H1 (cell line): ENCODE measurements at regions of chr2 and their contacts with region 1.

Region 1: GRCh38 chr2:180980106-180980942 is at the start of gene UBE2E3:
- DNase-seq: peak; percentile 54 to 91
- H3K4me3 ChIP-seq: peak within 1 kb of the TSS; percentile 81 to 97 (median 93)
- H3K27ac ChIP-seq: peak within 1 kb of the TSS; percentile 61
- H3K4me1 ChIP-seq: peaks cover 0 to 12% (median 3%) of the 10 kb centered on the region in 4 experiments; a peak in 1 of 7 replicates
- H3K27me3 ChIP-seq: no peaks in the 10 kb centered on the region; a peak in 1 of 7 replicates
- CTCF ChIP-seq: peak; percentile 50 to 62 (median 60)
- EP300 ChIP-seq: peak in 1 of 2 experiments; percentile 49; a peak in 2 of 3 replicates
- POLR2A ChIP-seq: peak; percentile 75 to 88
- RAD21 ChIP-seq: peak; percentile 52 to 54
- total RNA-seq, gene UBE2E3: 96.0 and 106 TPM in 2 replicates

Region 2: DNA sequence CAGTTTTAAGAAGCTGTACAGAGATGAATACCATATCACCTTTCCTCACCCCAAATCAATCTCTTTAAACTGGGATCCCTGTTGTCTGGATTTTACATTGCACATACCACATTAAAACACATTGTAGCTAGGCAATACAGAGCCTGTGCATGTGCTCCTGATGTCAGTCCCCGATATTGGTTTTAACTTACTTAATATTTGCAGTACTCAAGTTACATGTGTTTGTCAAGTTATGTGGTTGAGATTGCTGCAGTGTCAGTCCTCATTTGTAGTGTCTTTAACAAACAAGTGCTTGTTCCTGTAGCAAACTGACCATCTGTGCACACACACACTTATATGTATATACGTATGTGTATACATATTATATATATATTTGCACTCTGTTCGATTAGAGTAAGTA is 10.3 kb before region 1 on chr2:
- CTCF ChIA-PET with region 1: interaction called, 11 read pairs
- POLR2A ChIA-PET with region 1: interaction called, 9 read pairs
- DNase-seq: no peak
- H3K4me3 ChIP-seq: no peak overlapping the region
- H3K27ac ChIP-seq: no peak overlapping the region
- H3K4me1 ChIP-seq: no peaks in the 10 kb centered on the region
- H3K27me3 ChIP-seq: no peaks in the 10 kb centered on the region
- CTCF ChIP-seq: no peak
- EP300 ChIP-seq: no peak
- POLR2A ChIP-seq: no peak
- RAD21 ChIP-seq: no peak

Region 3: GRCh38 chr2:180991820-180992219 is 11.5 kb after region 1 on chr2:
- CTCF ChIA-PET with region 1: interaction called, 18 read pairs
- POLR2A ChIA-PET with region 1: interaction called, 17 read pairs
- DNase-seq: no peak
- H3K4me3 ChIP-seq: no peak overlapping the region
- H3K27ac ChIP-seq: no peak overlapping the region
- H3K4me1 ChIP-seq: peaks cover 0 to 2% (median 0%) of the 10 kb centered on the region in 4 experiments; a peak in 2 of 7 replicates
- H3K27me3 ChIP-seq: no peaks in the 10 kb centered on the region
- CTCF ChIP-seq: no peak
- EP300 ChIP-seq: no peak
- POLR2A ChIP-seq: no peak
- RAD21 ChIP-seq: no peak

Region 4: DNA sequence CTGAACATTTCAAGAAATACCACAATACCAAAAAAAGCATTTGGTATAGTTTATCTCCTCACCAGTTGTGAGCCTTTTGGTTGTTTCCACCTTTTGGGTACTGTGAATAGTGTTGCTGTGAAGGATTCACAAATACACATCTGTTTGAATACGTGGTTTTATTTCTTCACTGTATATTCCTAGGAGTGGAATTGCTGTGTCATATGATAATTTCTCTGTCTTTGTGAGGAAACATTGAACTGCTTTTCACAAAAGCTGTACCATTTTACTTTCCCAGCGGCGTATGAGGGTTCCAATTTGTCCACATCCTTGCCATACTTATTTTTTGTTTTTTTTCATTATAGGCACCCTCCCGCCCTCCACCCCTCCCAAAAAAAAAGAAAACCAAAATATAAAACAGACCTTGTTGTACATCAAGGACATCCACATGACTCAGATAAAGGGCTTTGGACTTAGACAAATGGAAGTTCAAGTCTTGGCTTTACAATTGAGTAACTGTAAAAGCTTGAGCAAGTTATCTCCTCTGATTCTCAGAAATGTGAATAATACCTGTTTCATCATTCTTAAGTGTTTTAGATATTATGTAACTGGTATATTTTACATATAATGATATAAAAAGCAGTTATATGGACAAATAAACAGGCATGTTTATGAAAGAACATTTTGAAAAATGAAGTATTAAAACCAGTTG is 19.1 kb after region 1 on chr2:
- CTCF ChIA-PET with region 1: interaction called, 6 read pairs
- POLR2A ChIA-PET with region 1: interaction called, 12 read pairs
- DNase-seq: no peak
- H3K4me3 ChIP-seq: no peak overlapping the region
- H3K27ac ChIP-seq: no peak overlapping the region
- H3K4me1 ChIP-seq: peaks cover 0 to 3% (median 1%) of the 10 kb centered on the region in 4 experiments; a peak in 2 of 7 replicates
- H3K27me3 ChIP-seq: no peaks in the 10 kb centered on the region
- CTCF ChIP-seq: no peak
- EP300 ChIP-seq: no peak
- POLR2A ChIP-seq: no peak
- RAD21 ChIP-seq: no peak